K562 (cell line): ENCODE measurements at regions of chr17 and their contacts with region 1.

Region 1: DNA sequence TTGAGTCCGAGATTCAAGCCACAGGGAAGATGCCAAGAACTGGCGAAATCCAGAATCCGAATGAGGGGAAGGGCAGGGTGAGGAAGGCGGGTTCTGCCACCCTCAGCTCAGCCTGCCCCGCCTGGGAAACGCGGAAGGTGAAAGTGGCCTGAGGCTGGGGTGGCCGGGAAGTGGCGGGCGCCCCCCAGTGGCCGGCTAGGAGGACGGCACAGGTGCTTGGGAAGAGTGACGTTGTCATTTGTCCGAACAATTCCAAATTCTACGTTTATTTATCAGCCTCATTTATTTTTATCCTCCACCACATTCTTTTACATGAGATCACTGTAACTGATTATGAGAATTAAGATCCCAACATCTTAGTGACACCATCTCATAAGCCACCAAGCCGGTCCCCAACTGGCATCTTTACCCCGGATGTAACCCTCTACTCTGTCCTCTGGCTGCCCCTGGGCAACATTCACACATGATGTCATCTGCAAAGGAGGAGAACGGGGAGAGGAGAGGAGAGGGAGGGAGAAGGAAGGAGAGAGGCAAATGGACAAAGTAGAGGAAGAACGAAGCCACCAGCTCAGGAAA is 21.3 kb downstream of the SRCIN1 start:
- DNase-seq: peak; percentile 71 to 86 (median 84)
- ATAC-seq: peak; percentile 94
- H3K4me3 ChIP-seq: no peak overlapping the region
- H3K27ac ChIP-seq: no peak overlapping the region
- H3K4me1 ChIP-seq: peaks cover 5 to 22% of the 10 kb centered on the region in 2 experiments; a peak in 4 of 5 replicates
- H3K27me3 ChIP-seq: peaks cover 15 to 38% of the 10 kb centered on the region in 2 experiments; a peak in 4 of 5 replicates
- CTCF ChIP-seq: peak; percentile 89 to 96 (median 95)
- EP300 ChIP-seq: no peak
- POLR2A ChIP-seq: no peak
- RAD21 ChIP-seq: peak; percentile 65 to 87

Region 2: DNA sequence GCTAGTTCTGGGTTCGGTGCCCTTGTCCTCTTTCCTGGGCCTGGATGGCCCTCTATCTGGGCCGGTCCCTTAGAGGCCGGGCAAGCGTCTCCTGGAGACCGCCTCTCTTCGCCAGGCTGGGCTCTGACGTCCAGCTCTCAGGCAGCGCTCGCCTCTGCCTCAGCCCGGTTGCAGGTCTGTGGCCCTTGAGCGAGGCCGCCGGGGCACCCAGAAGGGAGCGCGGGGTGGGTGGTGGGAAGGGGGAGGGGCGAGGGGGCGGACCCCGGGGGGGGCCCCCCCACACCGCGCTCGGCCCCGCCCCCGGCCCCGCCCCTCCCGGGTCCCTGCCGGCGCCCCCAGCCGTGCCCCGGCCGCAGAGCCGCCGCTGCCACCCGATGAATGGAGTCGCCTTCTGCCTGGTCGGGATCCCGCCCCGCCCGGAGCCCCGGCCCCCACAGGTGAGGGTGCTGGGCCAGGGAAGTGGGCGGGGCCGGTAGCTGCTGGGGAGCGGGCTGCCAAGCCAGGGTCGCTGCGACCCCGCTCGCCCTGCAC is 156.3 kb before region 1 on chr17 and contains the start of gene ARHGAP23:
- CTCF ChIA-PET with region 1: interaction called, 3 read pairs
- POLR2A ChIA-PET with region 1: no interaction called
- in situ Hi-C with region 1: loop called (anchors 10 kb)
- intact Hi-C with region 1: no loop called
- DNase-seq: peak in 3 of 4 experiments; percentile 63 to 90 (median 90)
- ATAC-seq: peak; percentile 57
- H3K4me3 ChIP-seq: no peak within 1 kb of the TSS
- H3K27ac ChIP-seq: no peak within 1 kb of the TSS
- H3K4me1 ChIP-seq: peaks cover 0 to 17% of the 10 kb centered on the region in 2 experiments; a peak in 2 of 5 replicates
- H3K27me3 ChIP-seq: peaks cover 4 to 28% of the 10 kb centered on the region in 2 experiments; a peak in 4 of 5 replicates
- CTCF ChIP-seq: no peak
- EP300 ChIP-seq: no peak
- POLR2A ChIP-seq: no peak
- RAD21 ChIP-seq: no peak
- polyA plus RNA-seq, gene ARHGAP23: 0.01 to 0.03 TPM

Region 3: GRCh38 chr17:38485146-38485468 is 99.3 kb before region 1 on chr17:
- CTCF ChIA-PET with region 1: no interaction called
- POLR2A ChIA-PET with region 1: no interaction called
- in situ Hi-C with region 1: loop called (anchors 5 kb)
- intact Hi-C with region 1: loop called (anchors 5 kb)
- DNase-seq: no peak
- ATAC-seq: no peak
- H3K4me3 ChIP-seq: no peak overlapping the region
- H3K27ac ChIP-seq: no peak overlapping the region
- H3K4me1 ChIP-seq: peaks cover 0 to 6% of the 10 kb centered on the region in 2 experiments; a peak in 2 of 5 replicates
- H3K27me3 ChIP-seq: peaks cover 0 to 22% of the 10 kb centered on the region in 2 experiments; a peak in 2 of 5 replicates
- CTCF ChIP-seq: no peak
- EP300 ChIP-seq: no peak
- POLR2A ChIP-seq: no peak
- RAD21 ChIP-seq: no peak

Region 4: GRCh38 chr17:38557836-38558727 is 26.4 kb before region 1 on chr17:
- CTCF ChIA-PET with region 1: interaction called, 17 read pairs
- POLR2A ChIA-PET with region 1: interaction called, 4 read pairs
- in situ Hi-C with region 1: no loop called
- intact Hi-C with region 1: loop called (anchors 1 kb)
- DNase-seq: peak; percentile 91 to 94 (median 92)
- ATAC-seq: peak; percentile 93
- H3K4me3 ChIP-seq: peak overlapping the region; percentile 37
- H3K27ac ChIP-seq: no peak overlapping the region
- H3K4me1 ChIP-seq: peaks cover 19 to 46% of the 10 kb centered on the region in 2 experiments
- H3K27me3 ChIP-seq: peaks cover 8 to 39% of the 10 kb centered on the region in 2 experiments; a peak in 4 of 5 replicates
- CTCF ChIP-seq: peak; percentile 92 to 95 (median 95)
- EP300 ChIP-seq: no peak
- POLR2A ChIP-seq: no peak
- RAD21 ChIP-seq: peak; percentile 53 to 87; a peak in 3 of 4 replicates

Region 5: GRCh38 chr17:38667099-38667786 is 82.8 kb after region 1 on chr17:
- CTCF ChIA-PET with region 1: interaction called, 5 read pairs
- POLR2A ChIA-PET with region 1: interaction called, 5 read pairs
- in situ Hi-C with region 1: no loop called
- intact Hi-C with region 1: loop called (anchors 5 kb)
- DNase-seq: peak; percentile 77 to 82 (median 78)
- ATAC-seq: peak; percentile 82
- H3K4me3 ChIP-seq: no peak overlapping the region
- H3K27ac ChIP-seq: no peak overlapping the region
- H3K4me1 ChIP-seq: peaks cover 0 to 7% of the 10 kb centered on the region in 2 experiments; a peak in 3 of 5 replicates
- H3K27me3 ChIP-seq: peaks cover 9 to 18% of the 10 kb centered on the region in 2 experiments; a peak in 4 of 5 replicates
- CTCF ChIP-seq: peak; percentile 96 to 100 (median 99)
- EP300 ChIP-seq: no peak
- POLR2A ChIP-seq: no peak
- RAD21 ChIP-seq: peak; percentile 90 to 95

Region 6: DNA sequence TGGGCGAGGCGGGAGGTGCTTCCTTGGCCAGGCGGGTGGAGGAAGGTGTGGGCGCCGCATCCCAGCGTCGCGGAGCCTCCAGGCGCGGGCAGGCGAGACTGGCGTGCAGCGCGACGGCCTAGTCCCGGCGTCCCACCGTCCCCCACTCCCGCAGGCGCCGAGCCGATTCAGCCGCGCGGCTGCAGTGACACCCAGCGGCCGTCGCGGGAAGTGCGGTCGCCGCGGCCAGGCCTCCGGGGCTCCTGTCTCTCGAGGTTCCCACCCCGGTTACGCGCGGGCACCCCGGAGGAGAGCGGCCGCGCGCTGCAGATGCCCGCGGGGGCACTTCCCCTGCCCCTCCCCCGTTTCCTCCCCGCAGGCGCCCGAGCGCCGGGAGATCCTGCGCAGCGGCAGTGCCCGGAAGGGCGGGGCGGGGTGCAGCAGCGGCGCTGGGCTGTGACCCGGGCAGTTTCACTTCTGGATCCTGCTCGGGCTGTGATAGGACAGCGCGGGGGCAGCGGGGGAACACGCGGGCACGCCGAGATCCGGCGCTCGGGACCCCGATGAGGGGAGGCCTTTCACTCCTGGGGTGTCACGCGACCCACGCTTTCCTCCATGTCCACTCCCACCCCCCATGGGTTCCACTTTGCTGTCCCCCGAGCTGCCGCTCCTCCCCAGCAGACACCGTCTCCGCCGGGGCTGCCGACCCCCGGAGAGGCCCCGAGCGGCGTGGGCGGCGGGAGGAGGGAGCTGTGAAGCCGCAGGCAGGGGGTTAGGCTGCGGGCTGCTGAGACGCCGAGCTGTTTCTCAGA is 1169.9 kb after region 1 on chr17:
- CTCF ChIA-PET with region 1: no interaction called
- POLR2A ChIA-PET with region 1: no interaction called
- in situ Hi-C with region 1: no loop called
- intact Hi-C with region 1: no loop called
- DNase-seq: peak; percentile 84 to 96 (median 96)
- ATAC-seq: peak; percentile 96
- H3K4me3 ChIP-seq: peak overlapping the region; percentile 53
- H3K27ac ChIP-seq: peak overlapping the region; percentile 64
- H3K4me1 ChIP-seq: peaks cover 9 to 43% of the 10 kb centered on the region in 2 experiments; a peak in 4 of 5 replicates
- H3K27me3 ChIP-seq: peaks cover 4 to 6% of the 10 kb centered on the region in 2 experiments; a peak in 2 of 5 replicates
- CTCF ChIP-seq: peak; percentile 82 to 93 (median 92)
- EP300 ChIP-seq: no peak; the same call in 1 of the 2 replicates
- POLR2A ChIP-seq: peak; percentile 66
- RAD21 ChIP-seq: peak; percentile 88 to 95